Endothelial cell of umbilical vein (primary cell): ENCODE measurements at regions of chr20 and their contacts with region 1.

Region 1: DNA sequence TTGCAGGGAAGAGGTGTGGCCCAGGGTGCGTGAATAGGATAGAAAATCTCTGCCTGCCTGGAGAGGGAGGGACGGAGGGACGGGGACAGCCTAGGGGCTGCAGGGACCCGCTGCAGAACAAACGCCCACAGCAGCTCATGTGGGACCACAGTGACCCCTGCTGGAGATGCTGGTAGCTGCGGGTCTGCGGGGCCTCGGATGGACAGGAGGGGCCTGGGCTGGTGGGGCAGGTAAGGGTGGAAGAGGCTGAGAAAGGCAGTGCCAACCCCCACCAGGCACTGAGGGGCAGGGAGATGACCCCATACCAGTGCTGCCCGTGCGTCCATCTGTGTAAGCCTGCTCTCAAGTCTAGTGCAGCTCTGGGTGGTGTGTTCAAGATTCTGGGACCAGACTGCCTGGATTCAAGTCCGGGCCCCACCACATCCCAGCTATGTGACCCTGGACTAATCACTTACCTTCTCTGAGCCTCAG is 39.4 kb downstream of the KIAA1755 start:
- DNase-seq: peak; percentile 60
- H3K4me3 ChIP-seq: no peak overlapping the region
- H3K27ac ChIP-seq: no peak overlapping the region
- H3K4me1 ChIP-seq: peaks cover 13% of the 10 kb centered on the region
- H3K27me3 ChIP-seq: no peaks in the 10 kb centered on the region
- CTCF ChIP-seq: peak; percentile 94 to 97
- POLR2A ChIP-seq: no peak

Region 2: GRCh38 chr20:36585463-36586108 is 1635.6 kb before region 1 on chr20:
- CTCF ChIA-PET with region 1: no interaction called
- POLR2A ChIA-PET with region 1: no interaction called
- dilution Hi-C with region 1: no loop called
- intact Hi-C with region 1: no loop called
- DNase-seq: no peak
- H3K4me3 ChIP-seq: no peak overlapping the region
- H3K27ac ChIP-seq: no peak overlapping the region
- H3K4me1 ChIP-seq: no peaks in the 10 kb centered on the region
- H3K27me3 ChIP-seq: no peaks in the 10 kb centered on the region
- CTCF ChIP-seq: no peak
- POLR2A ChIP-seq: no peak

Region 3: DNA sequence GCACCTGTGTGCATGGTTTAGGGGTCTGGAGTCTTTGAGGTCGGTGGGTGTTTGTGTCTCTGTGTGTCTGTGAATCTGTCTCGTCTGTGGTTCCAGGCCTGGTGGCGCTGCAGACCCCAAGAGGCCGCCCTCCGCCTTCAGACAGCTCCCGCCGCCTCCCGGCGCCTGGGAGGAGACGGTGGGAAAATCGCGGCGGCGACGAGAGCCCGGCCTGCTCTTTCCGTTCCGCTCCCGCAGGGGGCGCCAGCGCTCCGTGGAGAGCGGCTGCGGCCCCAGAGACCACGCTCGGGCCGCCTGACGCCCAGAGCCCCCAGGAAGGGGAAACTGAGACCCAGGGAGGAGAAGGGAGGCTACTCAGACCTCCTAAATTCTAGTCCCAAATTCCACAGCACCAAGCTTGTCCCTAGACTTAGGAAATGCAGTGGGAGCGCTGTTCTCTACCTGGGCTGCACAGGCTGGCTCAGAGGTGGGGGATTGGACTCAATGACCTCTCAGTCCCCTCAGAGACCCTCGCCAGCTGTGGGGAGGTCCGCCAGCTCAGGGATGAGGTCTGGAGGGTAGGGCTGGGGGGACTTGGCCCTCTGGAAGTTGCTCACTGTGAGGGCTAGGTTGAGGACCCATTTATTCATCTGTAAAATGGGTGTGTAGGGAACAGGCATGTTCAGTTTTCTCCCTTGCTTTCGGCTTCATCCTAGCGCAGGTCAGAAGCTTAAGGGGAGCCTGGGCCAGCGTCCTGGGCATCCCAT is 656.6 kb before region 1 on chr20:
- CTCF ChIA-PET with region 1: interaction called, 30 read pairs
- POLR2A ChIA-PET with region 1: no interaction called
- dilution Hi-C with region 1: no loop called
- intact Hi-C with region 1: loop called (anchors 1 kb)
- DNase-seq: peak; percentile 35
- H3K4me3 ChIP-seq: no peak overlapping the region
- H3K27ac ChIP-seq: no peak overlapping the region
- H3K4me1 ChIP-seq: no peaks in the 10 kb centered on the region
- H3K27me3 ChIP-seq: peaks cover 14 to 22% of the 10 kb centered on the region in 2 experiments
- CTCF ChIP-seq: peak; percentile 89 to 97
- POLR2A ChIP-seq: no peak

Region 4: DNA sequence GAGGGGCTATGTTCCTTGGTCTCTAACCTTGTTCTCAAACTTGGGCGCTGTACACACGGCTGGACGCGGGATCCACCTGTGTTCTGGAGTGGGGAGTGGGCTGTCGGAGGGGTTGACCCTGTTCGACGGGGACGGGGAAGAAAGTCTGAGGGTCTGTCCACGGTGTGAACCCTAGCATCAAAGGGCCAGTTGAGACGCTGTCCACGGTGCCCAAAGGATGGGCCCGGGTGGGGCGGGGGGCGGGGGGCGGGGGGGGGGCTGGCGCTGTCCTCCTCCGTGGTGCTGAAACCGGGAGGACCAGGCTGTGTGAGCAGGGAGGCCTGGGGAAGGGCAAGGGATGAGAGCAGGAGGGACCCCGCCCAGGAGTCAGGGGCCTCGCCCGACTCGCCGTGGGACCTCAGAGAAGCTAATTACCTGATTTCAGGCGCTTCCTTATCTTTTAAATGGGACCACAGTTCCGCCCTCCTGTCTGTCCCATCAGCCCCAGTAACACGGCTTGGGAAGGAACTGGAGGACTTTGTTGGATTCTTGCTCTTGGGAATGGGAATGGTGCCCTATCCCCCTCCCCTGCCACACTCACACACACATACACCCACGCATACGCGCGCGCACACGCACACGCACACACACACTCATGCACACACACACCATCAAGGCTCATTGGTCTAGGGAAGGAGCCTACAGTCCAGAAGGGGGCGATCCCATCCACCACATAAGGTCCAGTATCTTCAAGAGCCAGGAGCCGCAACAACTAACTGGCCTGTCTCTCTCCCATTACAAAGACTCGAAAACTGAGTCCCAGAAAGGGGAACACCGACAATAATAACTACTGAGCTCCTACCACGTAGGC is 319.3 kb before region 1 on chr20:
- CTCF ChIA-PET with region 1: interaction called, 9 read pairs
- POLR2A ChIA-PET with region 1: no interaction called
- dilution Hi-C with region 1: no loop called
- intact Hi-C with region 1: loop called (anchors 1 kb)
- DNase-seq: peak; percentile 31
- H3K4me3 ChIP-seq: no peak overlapping the region
- H3K27ac ChIP-seq: no peak overlapping the region
- H3K4me1 ChIP-seq: no peaks in the 10 kb centered on the region
- H3K27me3 ChIP-seq: peaks cover 36 to 38% of the 10 kb centered on the region in 2 experiments
- CTCF ChIP-seq: peak; percentile 36 to 53
- POLR2A ChIP-seq: no peak

Region 5: GRCh38 chr20:38073307-38074071 is 147.7 kb before region 1 on chr20:
- CTCF ChIA-PET with region 1: interaction called, 100 read pairs
- POLR2A ChIA-PET with region 1: no interaction called
- dilution Hi-C with region 1: no loop called
- intact Hi-C with region 1: loop called (anchors 1 kb)
- DNase-seq: peak; percentile 96
- H3K4me3 ChIP-seq: no peak overlapping the region
- H3K27ac ChIP-seq: peak overlapping the region; percentile 35
- H3K4me1 ChIP-seq: peaks cover 14% of the 10 kb centered on the region
- H3K27me3 ChIP-seq: no peaks in the 10 kb centered on the region
- CTCF ChIP-seq: peak; percentile 68 to 82
- POLR2A ChIP-seq: peak; percentile 24

Region 6: DNA sequence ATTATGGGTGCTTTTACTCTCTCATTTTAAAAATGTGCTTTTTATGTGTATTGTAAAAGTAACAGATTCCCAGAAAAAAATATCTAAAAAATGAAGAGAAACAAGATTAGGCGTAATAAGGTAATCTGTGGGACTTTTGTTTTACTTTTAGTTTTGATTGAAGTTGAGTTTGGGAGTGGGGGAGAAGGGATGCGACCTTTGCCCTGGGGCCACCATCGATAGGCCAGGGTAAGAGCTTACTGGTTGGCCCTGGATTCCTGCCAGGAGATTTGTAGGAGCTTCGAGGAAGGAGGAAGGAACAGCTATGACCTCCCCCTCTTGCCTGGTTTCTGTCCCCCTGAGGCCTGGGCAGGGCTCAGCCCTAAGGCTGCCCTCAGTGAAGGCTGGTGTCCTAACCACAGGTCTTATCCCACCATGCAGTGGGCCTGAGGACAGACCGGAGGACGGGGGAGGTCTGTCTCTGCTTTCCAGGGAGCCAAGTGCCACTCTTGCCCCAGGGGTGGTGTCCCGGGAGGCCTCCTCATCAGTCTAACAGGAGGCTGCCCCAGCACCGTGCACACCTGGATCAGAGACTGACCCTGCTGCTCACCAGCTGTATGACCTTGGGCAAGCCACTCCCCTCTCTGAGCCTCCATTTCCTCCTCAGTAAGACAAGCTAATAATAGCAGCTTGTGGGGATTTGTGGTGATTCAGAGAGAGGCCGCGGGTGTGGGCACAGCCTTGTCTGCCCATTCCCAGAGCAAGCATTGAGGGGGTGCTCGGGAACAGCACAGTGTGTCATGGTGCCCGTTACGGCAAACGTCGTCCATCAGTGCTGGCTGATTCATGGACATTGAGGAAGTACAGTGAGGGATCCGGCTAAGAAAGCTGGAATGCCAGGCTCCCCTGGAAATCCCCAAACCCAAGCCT is 77.3 kb before region 1 on chr20:
- CTCF ChIA-PET with region 1: interaction called, 42 read pairs
- POLR2A ChIA-PET with region 1: no interaction called
- dilution Hi-C with region 1: no loop called
- intact Hi-C with region 1: no loop called
- DNase-seq: peak; percentile 96
- H3K4me3 ChIP-seq: no peak overlapping the region
- H3K27ac ChIP-seq: peak overlapping the region; percentile 93
- H3K4me1 ChIP-seq: peaks cover 87% of the 10 kb centered on the region
- H3K27me3 ChIP-seq: no peaks in the 10 kb centered on the region
- CTCF ChIP-seq: no peak
- POLR2A ChIP-seq: peak; percentile 69

Region 7: GRCh38 chr20:38173237-38174156 is 47.7 kb before region 1 on chr20:
- CTCF ChIA-PET with region 1: interaction called, 156 read pairs
- POLR2A ChIA-PET with region 1: no interaction called
- dilution Hi-C with region 1: no loop called
- intact Hi-C with region 1: loop called (anchors 1 kb)
- DNase-seq: peak; percentile 71
- H3K4me3 ChIP-seq: no peak overlapping the region
- H3K27ac ChIP-seq: no peak overlapping the region
- H3K4me1 ChIP-seq: peaks cover 31% of the 10 kb centered on the region
- H3K27me3 ChIP-seq: no peaks in the 10 kb centered on the region
- CTCF ChIP-seq: no peak
- POLR2A ChIP-seq: no peak